ENCODE measurements at regions of chr7 and their contacts with region 1.

Region 1: GRCh38 chr7:100673300-100673941 is at the start of gene GNB2:
- DNase-seq: peak; percentile 100
- H3K4me3 ChIP-seq: peak within 1 kb of the TSS; percentile 94 to 99
- H3K27ac ChIP-seq: peak within 1 kb of the TSS; percentile 99
- H3K4me1 ChIP-seq: peaks cover 19% of the 10 kb centered on the region
- H3K27me3 ChIP-seq: no peaks in the 10 kb centered on the region
- CTCF ChIP-seq: peak in 1 of 3 experiments; percentile 12
- POLR2A ChIP-seq: peak; percentile 22 to 94
- total RNA-seq, gene GNB2: 283 TPM

Region 2: DNA sequence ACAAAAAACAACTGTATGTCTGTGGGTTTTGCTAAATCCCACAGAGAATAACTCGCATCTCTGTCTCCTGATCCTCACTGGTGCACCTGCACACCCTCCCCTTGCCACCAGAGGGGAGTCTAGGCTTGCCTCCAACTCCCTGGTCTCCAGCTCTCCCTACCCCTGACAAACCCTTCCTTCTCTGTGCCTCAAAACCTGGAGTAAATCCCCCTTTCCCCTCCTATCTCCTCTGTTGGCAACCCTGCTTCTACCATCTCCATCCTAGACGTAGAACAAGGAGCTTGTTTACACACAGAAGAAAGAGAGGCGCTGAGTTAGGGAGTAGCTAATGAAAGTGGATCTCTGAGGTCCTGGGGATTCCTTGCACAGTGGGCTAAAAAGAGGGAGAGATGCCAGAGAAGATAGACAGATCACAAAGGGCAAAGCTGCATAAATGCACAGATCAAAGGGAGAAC is 540.7 kb before region 1 on chr7:
- intact Hi-C with region 1: no loop called
- DNase-seq: no peak
- H3K4me3 ChIP-seq: no peak overlapping the region
- H3K27ac ChIP-seq: no peak overlapping the region
- H3K4me1 ChIP-seq: peaks cover 21% of the 10 kb centered on the region
- H3K27me3 ChIP-seq: no peaks in the 10 kb centered on the region
- CTCF ChIP-seq: peak; percentile 35 to 73 (median 51)
- POLR2A ChIP-seq: no peak

Region 3: GRCh38 chr7:100478966-100479665 is 194.3 kb before region 1 on chr7 and contains the start of gene TSC22D4:
- intact Hi-C with region 1: loop called (anchors 10 kb)
- DNase-seq: peak in 1 of 2 donors; percentile 98
- H3K4me3 ChIP-seq: peak within 1 kb of the TSS; percentile 88 to 92
- H3K27ac ChIP-seq: peak within 1 kb of the TSS; percentile 92
- H3K4me1 ChIP-seq: peaks cover 55% of the 10 kb centered on the region
- H3K27me3 ChIP-seq: no peaks in the 10 kb centered on the region
- CTCF ChIP-seq: no peak
- POLR2A ChIP-seq: peak in 1 of 2 donors; percentile 87
- total RNA-seq, gene TSC22D4: 34.6 TPM

Region 4: GRCh38 chr7:100586266-100587025 is 87.0 kb before region 1 on chr7 and contains the start of gene FBXO24:
- intact Hi-C with region 1: loop called (anchors 5 kb)
- DNase-seq: peak; percentile 100
- H3K4me3 ChIP-seq: peak within 1 kb of the TSS; percentile 79 to 96
- H3K27ac ChIP-seq: peak within 1 kb of the TSS; percentile 94
- H3K4me1 ChIP-seq: peaks cover 57% of the 10 kb centered on the region
- H3K27me3 ChIP-seq: no peaks in the 10 kb centered on the region
- CTCF ChIP-seq: no peak
- POLR2A ChIP-seq: peak in 1 of 2 donors; percentile 60
- total RNA-seq, gene FBXO24: 0.98 TPM

Region 5: GRCh38 chr7:100604028-100604975 is 69.1 kb before region 1 on chr7:
- intact Hi-C with region 1: loop called (anchors 5 kb)
- DNase-seq: no peak
- H3K4me3 ChIP-seq: peak overlapping the region; percentile 74 to 86
- H3K27ac ChIP-seq: peak overlapping the region; percentile 93
- H3K4me1 ChIP-seq: peaks cover 26% of the 10 kb centered on the region
- H3K27me3 ChIP-seq: no peaks in the 10 kb centered on the region
- CTCF ChIP-seq: no peak
- POLR2A ChIP-seq: peak in 1 of 2 donors; percentile 83

Region 6: DNA sequence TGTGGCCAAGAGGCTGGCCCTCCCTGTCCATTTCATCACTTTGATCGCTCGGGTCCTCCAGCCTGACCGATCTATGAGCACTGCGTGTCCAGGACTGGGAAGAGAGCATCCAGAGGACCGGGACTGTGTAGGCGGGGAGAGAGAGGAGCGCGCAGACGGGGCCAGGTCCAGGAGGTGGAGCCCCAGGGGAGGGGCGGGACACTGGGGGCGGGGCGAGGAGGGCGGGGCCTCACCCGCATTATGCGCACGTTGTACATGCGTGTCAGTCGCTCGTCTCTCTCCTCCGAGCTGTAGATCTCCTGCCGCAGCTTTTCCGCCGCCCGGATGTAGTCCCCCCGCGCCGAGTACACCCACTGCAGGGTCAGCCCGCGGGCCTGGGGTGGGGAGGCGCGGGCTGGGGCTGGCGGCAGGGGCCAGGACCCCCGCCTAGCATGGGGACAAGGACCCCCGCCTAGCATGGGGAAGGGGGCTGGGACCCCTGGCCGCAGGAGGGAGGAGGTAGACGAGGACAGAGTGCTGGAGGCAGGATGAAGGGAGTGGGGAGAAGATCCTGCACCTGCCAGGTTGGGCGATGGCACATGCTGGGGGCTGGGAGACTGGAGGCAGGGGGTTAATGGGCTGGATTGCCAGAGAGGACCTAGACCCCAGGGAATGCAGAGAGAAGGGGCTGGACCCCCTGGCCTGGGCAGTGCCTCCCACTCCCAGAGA is 46.7 kb before region 1 on chr7:
- intact Hi-C with region 1: no loop called
- DNase-seq: no peak
- H3K4me3 ChIP-seq: peak overlapping the region; percentile 35 to 41
- H3K27ac ChIP-seq: peak overlapping the region; percentile 20
- H3K4me1 ChIP-seq: peaks cover 15% of the 10 kb centered on the region
- H3K27me3 ChIP-seq: no peaks in the 10 kb centered on the region
- CTCF ChIP-seq: no peak
- POLR2A ChIP-seq: no peak